ENCODE measurements at regions of chr12 and their contacts with region 1.

Region 1: GRCh38 chr12:8662593-8662992 is at the start of gene MFAP5:
- DNase-seq: no peak
- H3K4me3 ChIP-seq: no peak within 1 kb of the TSS
- H3K27ac ChIP-seq: no peak within 1 kb of the TSS
- H3K27me3 ChIP-seq: peaks cover 3% of the 10 kb centered on the region
- CTCF ChIP-seq: no peak
- polyA plus RNA-seq, gene MFAP5: 0.36 and 0.60 TPM in 2 replicates

Region 2: DNA sequence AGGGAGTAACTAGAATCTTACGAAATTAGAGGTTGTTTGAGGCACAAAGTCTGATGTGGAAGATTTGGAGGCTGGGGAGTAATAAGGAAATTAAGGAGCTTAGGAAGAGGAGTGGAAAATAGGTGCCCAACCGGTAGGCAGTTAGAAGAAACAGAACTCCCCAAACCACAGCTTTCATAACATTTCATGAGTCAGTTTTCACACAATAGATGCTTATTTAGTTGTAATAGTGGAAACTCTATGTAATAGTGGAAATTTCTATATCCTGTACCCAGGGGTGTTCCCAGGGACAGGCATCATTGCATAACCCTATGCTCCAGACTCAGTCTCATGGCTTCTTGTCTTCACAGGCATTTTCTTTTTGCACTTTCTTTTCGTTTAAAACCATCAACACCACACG is 604.8 kb before region 1 on chr12:
- CTCF ChIA-PET with region 1: no interaction called
- POLR2A ChIA-PET with region 1: no interaction called
- DNase-seq: no peak
- H3K4me3 ChIP-seq: no peak overlapping the region
- H3K27ac ChIP-seq: no peak overlapping the region
- H3K27me3 ChIP-seq: no peaks in the 10 kb centered on the region
- CTCF ChIP-seq: no peak

Region 3: GRCh38 chr12:8609061-8609570 is 53.5 kb before region 1 on chr12:
- CTCF ChIA-PET with region 1: interaction called, 20 read pairs
- POLR2A ChIA-PET with region 1: no interaction called
- DNase-seq: peak; percentile 11
- H3K4me3 ChIP-seq: peak overlapping the region; percentile 5; the same call in 1 of the 2 replicates
- H3K27ac ChIP-seq: no peak overlapping the region
- H3K27me3 ChIP-seq: no peaks in the 10 kb centered on the region
- CTCF ChIP-seq: peak; percentile 66

Region 4: GRCh38 chr12:8681041-8681902 is 18.7 kb after region 1 on chr12:
- CTCF ChIA-PET with region 1: interaction called, 25 read pairs
- POLR2A ChIA-PET with region 1: no interaction called
- DNase-seq: no peak
- H3K4me3 ChIP-seq: no peak overlapping the region
- H3K27ac ChIP-seq: no peak overlapping the region
- H3K27me3 ChIP-seq: peaks cover 3% of the 10 kb centered on the region
- CTCF ChIP-seq: no peak

Region 5: DNA sequence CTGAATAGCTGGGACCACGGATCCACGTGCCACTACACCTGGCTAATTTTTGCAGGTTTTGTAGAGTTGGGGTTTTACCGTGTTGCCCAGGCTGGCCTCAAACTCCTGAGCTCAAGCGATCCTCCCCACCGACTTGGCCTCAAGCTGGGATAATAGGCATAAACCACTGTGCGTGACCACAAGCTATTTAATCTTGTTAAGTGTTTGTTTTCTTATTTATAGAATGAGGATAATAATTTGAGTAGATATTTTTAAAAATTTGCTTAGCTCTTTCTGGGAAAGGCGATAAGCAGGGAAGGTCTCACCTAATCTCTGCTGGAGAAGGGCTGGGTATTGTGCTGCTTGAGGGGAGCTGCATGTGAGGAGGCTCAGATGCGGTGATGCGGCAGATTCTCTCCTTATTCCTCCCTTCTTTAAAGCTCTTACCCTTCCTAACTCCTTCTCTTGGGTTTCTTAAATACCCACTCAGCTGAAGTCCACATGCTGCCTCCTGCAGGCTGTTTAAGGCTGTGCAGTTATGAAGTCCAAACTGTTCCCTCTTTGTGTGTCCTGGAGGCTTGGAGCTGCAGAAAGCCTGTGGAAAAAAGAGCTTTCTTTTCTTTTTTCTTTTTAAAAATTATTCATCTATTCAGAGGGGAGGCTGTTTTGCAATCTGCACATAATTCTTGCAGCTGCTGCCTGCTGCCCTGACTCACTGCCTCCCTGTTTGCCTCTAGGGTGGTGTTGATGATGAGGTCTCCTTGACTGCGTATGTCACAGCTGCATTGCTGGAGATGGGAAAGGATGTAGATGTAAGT is 197.8 kb after region 1 on chr12:
- CTCF ChIA-PET with region 1: interaction called, 51 read pairs
- POLR2A ChIA-PET with region 1: no interaction called
- DNase-seq: no peak
- H3K4me3 ChIP-seq: no peak overlapping the region
- H3K27ac ChIP-seq: no peak overlapping the region
- H3K27me3 ChIP-seq: no peaks in the 10 kb centered on the region
- CTCF ChIP-seq: peak; percentile 66

Region 6: GRCh38 chr12:8912914-8913313 is 250.3 kb after region 1 on chr12:
- CTCF ChIA-PET with region 1: interaction called, 14 read pairs
- POLR2A ChIA-PET with region 1: interaction called, 10 read pairs
- DNase-seq: no peak
- H3K4me3 ChIP-seq: no peak overlapping the region
- H3K27ac ChIP-seq: no peak overlapping the region
- H3K27me3 ChIP-seq: no peaks in the 10 kb centered on the region
- CTCF ChIP-seq: 0 out of 2 replicates have a peak, but pooled peaks have one; percentile 10

Region 7: GRCh38 chr12:8980137-8980536 is 317.5 kb after region 1 on chr12:
- CTCF ChIA-PET with region 1: no interaction called
- POLR2A ChIA-PET with region 1: no interaction called
- DNase-seq: no peak
- H3K4me3 ChIP-seq: no peak overlapping the region
- H3K27ac ChIP-seq: no peak overlapping the region
- H3K27me3 ChIP-seq: no peaks in the 10 kb centered on the region
- CTCF ChIP-seq: no peak

Region 8: DNA sequence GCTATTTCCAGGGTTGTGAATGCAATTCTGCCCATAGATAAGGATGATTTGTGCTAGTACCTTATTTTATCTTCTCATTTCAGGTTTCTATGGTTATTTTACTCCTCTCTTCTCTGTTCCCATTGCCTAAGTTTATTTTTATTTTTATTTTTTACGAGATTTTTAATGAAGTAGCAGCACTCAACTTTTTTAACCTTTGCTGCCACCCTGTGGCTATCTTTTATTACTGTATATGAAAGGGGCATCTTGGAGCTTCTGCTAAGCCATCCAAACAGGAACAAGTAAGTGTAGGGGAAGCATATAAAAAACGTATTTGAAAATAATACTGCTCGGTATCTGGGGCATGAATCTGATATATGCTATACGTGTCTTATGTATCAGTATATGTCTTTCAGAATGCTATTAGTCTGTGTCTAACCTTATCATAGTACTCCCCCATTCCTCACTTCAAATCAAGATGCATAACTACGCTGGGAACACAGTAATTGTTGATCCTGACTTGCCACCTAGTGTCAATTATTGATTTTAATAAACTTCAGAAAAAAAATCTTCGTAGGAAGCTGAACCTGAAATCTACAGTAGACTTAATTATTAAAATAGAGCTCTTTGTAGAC is 387.0 kb after region 1 on chr12:
- CTCF ChIA-PET with region 1: interaction called, 60 read pairs
- POLR2A ChIA-PET with region 1: no interaction called
- DNase-seq: peak; percentile 11
- H3K4me3 ChIP-seq: no peak overlapping the region
- H3K27ac ChIP-seq: no peak overlapping the region
- H3K27me3 ChIP-seq: no peaks in the 10 kb centered on the region
- CTCF ChIP-seq: peak; percentile 54

Measured in AG04450 (cell line).